ENCODE measurements at regions of chr2 and their contacts with region 1.

Region 1: GRCh38 chr2:64228126-64228678 is 84.0 kb upstream of the PELI1 start:
- DNase-seq: peak; percentile 76
- H3K4me3 Mint-ChIP-seq: peak overlapping the region; percentile 92
- H3K27ac Mint-ChIP-seq: peak overlapping the region; percentile 89
- H3K4me1 Mint-ChIP-seq: peaks cover 31% of the 10 kb centered on the region
- H3K27me3 Mint-ChIP-seq: no peaks in the 10 kb centered on the region

Region 2: DNA sequence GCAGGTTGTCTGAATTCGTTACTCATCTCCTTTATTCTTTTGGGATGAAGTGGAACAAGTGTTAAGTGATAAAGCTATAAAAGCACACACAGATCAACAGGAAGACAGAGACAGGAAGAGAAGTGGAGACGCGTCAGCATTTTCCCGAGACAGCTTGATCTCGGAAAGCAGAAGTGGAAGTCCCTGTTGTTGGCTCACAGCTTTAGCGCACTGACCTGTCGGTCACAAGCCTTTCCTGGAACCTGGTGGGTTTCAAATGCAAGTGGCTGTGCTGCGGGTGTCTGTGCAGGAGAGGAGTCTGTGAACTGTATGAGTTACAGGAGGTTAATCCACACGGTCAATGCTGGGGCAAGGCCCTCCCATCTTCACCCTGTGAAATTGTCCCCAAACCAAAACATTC is 32.6 kb after region 1 on chr2:
- CTCF ChIA-PET with region 1: no interaction called
- intact Hi-C with region 1: loop called (anchors 2 kb)
- DNase-seq: peak; percentile 57
- H3K4me3 Mint-ChIP-seq: peak overlapping the region; percentile 45
- H3K27ac Mint-ChIP-seq: peak overlapping the region; percentile 87
- H3K4me1 Mint-ChIP-seq: peaks cover 12% of the 10 kb centered on the region
- H3K27me3 Mint-ChIP-seq: no peaks in the 10 kb centered on the region

Region 3: DNA sequence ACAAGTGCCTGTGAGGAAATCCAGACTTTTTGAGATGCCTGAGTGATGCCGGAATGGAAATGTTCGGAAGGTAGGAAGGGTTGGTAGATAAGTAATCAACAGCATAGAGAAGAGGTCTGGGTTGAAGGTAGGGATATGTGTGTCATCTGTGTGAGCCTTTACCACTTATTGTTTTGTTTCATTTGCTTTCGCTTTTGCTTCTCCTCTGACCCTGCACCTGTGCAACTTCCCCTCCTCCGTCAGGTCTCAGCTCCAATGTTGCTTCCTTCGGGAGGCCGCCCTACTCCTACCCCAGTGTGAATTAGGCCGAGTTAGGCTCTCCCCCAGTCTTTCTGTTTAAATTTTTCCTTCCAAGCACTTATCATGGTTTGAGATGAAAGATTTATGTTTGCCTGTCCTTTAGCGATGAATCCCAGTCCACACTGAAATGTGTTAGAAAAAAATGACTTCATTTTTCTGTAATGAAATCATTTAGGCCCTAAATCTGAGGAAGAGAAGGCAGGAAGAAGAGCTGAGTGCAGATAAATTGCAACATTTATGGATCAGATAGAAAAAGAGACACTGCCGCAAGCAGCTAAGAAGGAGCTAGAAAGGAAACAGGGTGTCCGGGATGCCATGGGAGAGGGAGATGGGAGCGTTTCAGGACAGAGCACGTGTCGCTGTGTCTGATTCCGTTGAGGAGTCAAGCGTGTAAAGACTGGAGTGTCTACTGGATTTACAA is 55.6 kb after region 1 on chr2:
- CTCF ChIA-PET with region 1: no interaction called
- intact Hi-C with region 1: loop called (anchors 2 kb)
- DNase-seq: peak; percentile 42
- H3K4me3 Mint-ChIP-seq: no peak overlapping the region
- H3K27ac Mint-ChIP-seq: no peak overlapping the region
- H3K4me1 Mint-ChIP-seq: no peaks in the 10 kb centered on the region
- H3K27me3 Mint-ChIP-seq: no peaks in the 10 kb centered on the region

Measured in activated naive CD4-positive, alpha-beta T cell treated with anti-CD3 and anti-CD28 coated beads for 36 hours (primary cell).